H1 (cell line): ENCODE measurements at regions of chr20 and their contacts with region 1.

Region 1: GRCh38 chr20:9503526-9504245 is 10.7 kb upstream of the LAMP5 start:
- DNase-seq: no peak
- H3K4me3 ChIP-seq: no peak overlapping the region
- H3K27ac ChIP-seq: no peak overlapping the region
- H3K4me1 ChIP-seq: peaks cover 0 to 21% (median 12%) of the 10 kb centered on the region in 4 experiments; a peak in 6 of 7 replicates
- H3K27me3 ChIP-seq: peaks cover 33 to 46% (median 43%) of the 10 kb centered on the region in 4 experiments
- CTCF ChIP-seq: peak; percentile 37 to 50 (median 49)
- EP300 ChIP-seq: no peak
- POLR2A ChIP-seq: no peak
- RAD21 ChIP-seq: peak; percentile 59 to 67

Region 2: GRCh38 chr20:9458138-9458796 is 45.4 kb before region 1 on chr20:
- CTCF ChIA-PET with region 1: interaction called, 32 read pairs
- POLR2A ChIA-PET with region 1: no interaction called
- DNase-seq: peak in 1 of 2 experiments; percentile 53
- H3K4me3 ChIP-seq: no peak overlapping the region
- H3K27ac ChIP-seq: no peak overlapping the region
- H3K4me1 ChIP-seq: no peaks in the 10 kb centered on the region
- H3K27me3 ChIP-seq: no peaks in the 10 kb centered on the region
- CTCF ChIP-seq: peak in 2 of 3 experiments; percentile 53 to 62; a peak in 3 of 4 replicates
- EP300 ChIP-seq: no peak
- POLR2A ChIP-seq: no peak
- RAD21 ChIP-seq: peak; percentile 54 to 56; a peak in 3 of 4 replicates

Region 3: DNA sequence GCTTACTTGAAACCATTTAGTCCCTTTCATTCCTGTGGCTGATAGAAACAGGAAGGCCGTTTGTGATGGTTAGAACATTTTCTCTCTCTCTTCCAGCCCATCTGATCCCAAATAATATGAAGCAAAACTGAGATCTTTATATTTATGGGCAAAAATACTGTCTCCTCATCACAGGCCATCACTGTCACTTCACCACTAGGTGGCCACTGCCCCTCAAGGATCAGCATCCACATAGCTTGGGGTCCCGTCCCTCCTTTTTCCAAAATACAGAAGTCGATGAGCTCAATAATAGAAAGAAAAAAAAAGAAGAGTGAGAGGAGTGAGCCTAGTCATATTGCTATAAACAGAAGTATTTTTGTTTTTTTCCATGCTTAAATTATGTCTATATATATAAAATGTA is 35.7 kb before region 1 on chr20:
- CTCF ChIA-PET with region 1: interaction called, 19 read pairs
- POLR2A ChIA-PET with region 1: no interaction called
- DNase-seq: no peak
- H3K4me3 ChIP-seq: no peak overlapping the region
- H3K27ac ChIP-seq: no peak overlapping the region
- H3K4me1 ChIP-seq: no peaks in the 10 kb centered on the region
- H3K27me3 ChIP-seq: no peaks in the 10 kb centered on the region
- CTCF ChIP-seq: peak; percentile 78 to 83 (median 80)
- EP300 ChIP-seq: no peak
- POLR2A ChIP-seq: no peak
- RAD21 ChIP-seq: peak; percentile 86 to 88

Region 4: GRCh38 chr20:9474835-9475415 is 28.8 kb before region 1 on chr20:
- CTCF ChIA-PET with region 1: interaction called, 24 read pairs
- POLR2A ChIA-PET with region 1: no interaction called
- DNase-seq: no peak
- H3K4me3 ChIP-seq: no peak overlapping the region
- H3K27ac ChIP-seq: no peak overlapping the region
- H3K4me1 ChIP-seq: no peaks in the 10 kb centered on the region
- H3K27me3 ChIP-seq: no peaks in the 10 kb centered on the region
- CTCF ChIP-seq: no peak
- EP300 ChIP-seq: no peak
- POLR2A ChIP-seq: no peak
- RAD21 ChIP-seq: no peak

Region 5: GRCh38 chr20:9514461-9515213 is 11.0 kb after region 1 on chr20 and contains the start of gene LAMP5:
- CTCF ChIA-PET with region 1: interaction called, 79 read pairs
- POLR2A ChIA-PET with region 1: interaction called, 4 read pairs
- DNase-seq: peak in 1 of 2 experiments; percentile 80
- H3K4me3 ChIP-seq: peak within 1 kb of the TSS; percentile 42 to 63 (median 48); a peak in 7 of 8 replicates
- H3K27ac ChIP-seq: no peak within 1 kb of the TSS
- H3K4me1 ChIP-seq: peaks cover 2 to 28% (median 14%) of the 10 kb centered on the region in 4 experiments; a peak in 6 of 7 replicates
- H3K27me3 ChIP-seq: peaks cover 52 to 93% (median 73%) of the 10 kb centered on the region in 4 experiments
- CTCF ChIP-seq: no peak
- EP300 ChIP-seq: no peak
- POLR2A ChIP-seq: no peak
- RAD21 ChIP-seq: peak; percentile 1; a peak in 1 of 4 replicates
- total RNA-seq, gene LAMP5: 0.22 and 0.31 TPM in 2 replicates

Region 6: GRCh38 chr20:9609887-9610502 is 106.3 kb after region 1 on chr20:
- CTCF ChIA-PET with region 1: interaction called, 10 read pairs
- POLR2A ChIA-PET with region 1: no interaction called
- DNase-seq: peak; percentile 31 to 73
- H3K4me3 ChIP-seq: no peak overlapping the region
- H3K27ac ChIP-seq: no peak overlapping the region
- H3K4me1 ChIP-seq: peaks cover 0 to 2% (median 0%) of the 10 kb centered on the region in 4 experiments; a peak in 1 of 7 replicates
- H3K27me3 ChIP-seq: no peaks in the 10 kb centered on the region; a peak in 2 of 7 replicates
- CTCF ChIP-seq: peak in 2 of 3 experiments; percentile 49 to 64; a peak in 3 of 4 replicates
- EP300 ChIP-seq: no peak
- POLR2A ChIP-seq: no peak
- RAD21 ChIP-seq: peak; percentile 76 to 84